Activated CD4-positive, alpha-beta T cell treated with anti-CD3 and anti-CD28 coated beads for 36 hours (primary cell): ENCODE measurements at regions of chr13 and their contacts with region 1.

Region 1: DNA sequence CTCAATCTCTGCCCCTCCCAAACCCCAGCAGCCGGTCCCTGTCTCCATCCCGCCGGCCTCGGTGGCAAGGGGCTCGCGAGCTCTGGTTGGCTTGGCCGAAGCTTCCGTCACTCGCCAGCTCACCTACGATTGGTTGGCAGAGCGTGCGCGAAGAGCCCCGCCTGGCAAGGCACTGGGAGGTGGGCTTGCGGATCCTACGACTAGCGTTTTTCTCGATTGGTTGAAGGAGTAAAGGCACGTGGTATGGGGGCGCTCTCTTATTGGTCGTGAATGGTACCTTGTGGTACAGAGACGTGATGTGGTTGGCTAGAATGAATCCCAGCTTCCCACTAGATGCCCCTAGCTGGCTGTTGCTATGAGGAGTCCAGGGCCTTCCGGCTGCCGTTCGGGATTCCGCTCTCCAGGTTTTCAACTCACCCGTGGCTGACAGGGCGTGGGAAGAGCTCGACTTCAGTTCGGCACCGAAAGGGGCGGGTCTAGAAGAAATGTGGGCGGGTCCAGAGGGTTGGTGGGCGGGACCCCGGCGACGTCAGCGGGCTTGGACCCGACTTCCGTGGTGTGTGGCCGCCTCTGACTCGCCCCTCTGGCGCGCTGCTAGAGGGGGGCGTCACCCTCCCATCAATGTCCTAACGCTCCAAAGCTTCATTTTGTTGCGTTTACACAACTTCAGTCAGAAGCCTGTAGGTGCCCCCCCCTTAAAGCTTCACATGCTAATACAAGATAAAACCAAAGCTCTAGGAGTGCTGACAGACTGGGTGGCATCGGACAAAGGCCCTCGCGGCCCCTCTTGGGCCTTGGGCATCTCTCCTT is 847 bp upstream of the RAP2A start:
- DNase-seq: peak; percentile 98
- ATAC-seq: peak; percentile 85
- H3K4me3 Mint-ChIP-seq: peak overlapping the region; percentile 94
- H3K27ac Mint-ChIP-seq: peak overlapping the region; percentile 99
- H3K4me1 Mint-ChIP-seq: peaks cover 25% of the 10 kb centered on the region
- H3K27me3 Mint-ChIP-seq: peaks cover 5% of the 10 kb centered on the region

Region 2: GRCh38 chr13:95676762-95677563 is 1756.2 kb before region 1 on chr13 and contains the start of gene DNAJC3:
- CTCF ChIA-PET with region 1: no interaction called
- POLR2A ChIA-PET with region 1: interaction called, 5 read pairs
- intact Hi-C with region 1: loop called (anchors 2 to 5 kb)
- DNase-seq: peak; percentile 99
- ATAC-seq: peak; percentile 96
- H3K4me3 Mint-ChIP-seq: peak within 1 kb of the TSS; percentile 96
- H3K27ac Mint-ChIP-seq: peak within 1 kb of the TSS; percentile 92
- H3K4me1 Mint-ChIP-seq: peaks cover 52% of the 10 kb centered on the region
- H3K27me3 Mint-ChIP-seq: no peaks in the 10 kb centered on the region
- total RNA-seq, gene DNAJC3: 13.4 to 16.3 TPM

Region 3: GRCh38 chr13:97295283-97296182 is 137.6 kb before region 1 on chr13:
- CTCF ChIA-PET with region 1: no interaction called
- POLR2A ChIA-PET with region 1: no interaction called
- intact Hi-C with region 1: loop called in 1 of 2 experiments (anchors 1 kb)
- DNase-seq: no peak
- ATAC-seq: no peak
- H3K4me3 Mint-ChIP-seq: no peak overlapping the region
- H3K27ac Mint-ChIP-seq: no peak overlapping the region
- H3K4me1 Mint-ChIP-seq: peaks cover 46% of the 10 kb centered on the region
- H3K27me3 Mint-ChIP-seq: no peaks in the 10 kb centered on the region

Region 4: GRCh38 chr13:97459215-97459777 is 26.2 kb after region 1 on chr13:
- CTCF ChIA-PET with region 1: interaction called, 3 read pairs
- POLR2A ChIA-PET with region 1: interaction called, 5 read pairs
- intact Hi-C with region 1: loop called (anchors 2 kb)
- DNase-seq: no peak
- ATAC-seq: peak; percentile 55
- H3K4me3 Mint-ChIP-seq: no peak overlapping the region
- H3K27ac Mint-ChIP-seq: peak overlapping the region; percentile 42
- H3K4me1 Mint-ChIP-seq: peaks cover 33% of the 10 kb centered on the region
- H3K27me3 Mint-ChIP-seq: no peaks in the 10 kb centered on the region

Region 5: GRCh38 chr13:97506511-97506910 is 73.4 kb after region 1 on chr13:
- CTCF ChIA-PET with region 1: no interaction called
- POLR2A ChIA-PET with region 1: no interaction called
- intact Hi-C with region 1: no loop called
- DNase-seq: no peak
- ATAC-seq: no peak
- H3K4me3 Mint-ChIP-seq: no peak overlapping the region
- H3K27ac Mint-ChIP-seq: no peak overlapping the region
- H3K4me1 Mint-ChIP-seq: no peaks in the 10 kb centered on the region
- H3K27me3 Mint-ChIP-seq: peaks cover 11% of the 10 kb centered on the region

Region 6: GRCh38 chr13:97539651-97540610 is 106.8 kb after region 1 on chr13:
- CTCF ChIA-PET with region 1: no interaction called
- POLR2A ChIA-PET with region 1: no interaction called
- intact Hi-C with region 1: loop called (anchors 5 kb)
- DNase-seq: no peak
- ATAC-seq: peak; percentile 90
- H3K4me3 Mint-ChIP-seq: no peak overlapping the region
- H3K27ac Mint-ChIP-seq: no peak overlapping the region
- H3K4me1 Mint-ChIP-seq: peaks cover 7% of the 10 kb centered on the region
- H3K27me3 Mint-ChIP-seq: peaks cover 5% of the 10 kb centered on the region

Region 7: DNA sequence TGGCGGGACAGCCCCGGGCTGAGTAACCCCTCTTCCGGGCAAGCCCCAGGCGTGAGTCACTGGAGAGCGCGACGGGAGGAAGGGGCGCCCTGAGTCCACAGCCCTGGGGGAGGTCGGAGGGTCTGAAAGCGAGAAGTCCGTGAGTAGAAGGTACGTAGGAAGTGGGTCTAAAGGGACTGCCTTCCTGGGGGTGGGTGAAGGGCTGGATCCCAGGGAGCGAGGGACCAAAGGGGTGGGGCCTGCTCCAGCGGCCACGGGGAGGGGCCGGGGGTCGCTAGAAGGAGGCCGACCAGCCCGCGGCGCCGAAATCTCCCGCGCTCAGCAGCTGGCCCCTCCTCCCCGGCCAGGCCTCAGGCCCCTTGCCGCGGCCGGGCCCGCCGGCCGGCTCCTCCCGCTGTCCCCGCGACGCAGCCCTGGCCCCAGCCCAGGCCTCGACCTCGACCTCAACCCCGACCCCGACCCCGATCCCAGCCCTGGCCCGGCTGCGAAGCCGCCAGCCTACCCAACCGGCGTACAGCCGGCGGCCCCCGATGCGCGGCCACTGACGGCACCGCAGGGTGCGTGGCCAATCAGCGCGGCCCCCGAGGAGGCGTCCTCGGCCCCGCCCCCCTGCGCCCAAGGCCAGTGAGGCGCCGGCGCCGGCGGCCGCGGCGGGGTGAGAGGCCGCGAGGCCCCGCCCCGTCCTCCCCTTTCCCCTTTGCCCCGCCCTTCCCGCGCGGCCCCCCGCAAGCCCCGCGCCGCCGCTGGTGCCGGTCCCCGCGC is 542.9 kb after region 1 on chr13:
- CTCF ChIA-PET with region 1: no interaction called
- POLR2A ChIA-PET with region 1: no interaction called
- intact Hi-C with region 1: loop called (anchors 1 to 2 kb)
- DNase-seq: peak; percentile 94
- ATAC-seq: peak; percentile 92
- H3K4me3 Mint-ChIP-seq: peak overlapping the region; percentile 99
- H3K27ac Mint-ChIP-seq: peak overlapping the region; percentile 96
- H3K4me1 Mint-ChIP-seq: peaks cover 31% of the 10 kb centered on the region
- H3K27me3 Mint-ChIP-seq: no peaks in the 10 kb centered on the region

Region 8: GRCh38 chr13:98570929-98571372 is 1137.8 kb after region 1 on chr13:
- CTCF ChIA-PET with region 1: no interaction called
- POLR2A ChIA-PET with region 1: no interaction called
- intact Hi-C with region 1: loop called (anchors 2 to 10 kb)
- DNase-seq: peak; percentile 65
- ATAC-seq: peak; percentile 58
- H3K4me3 Mint-ChIP-seq: peak overlapping the region; percentile 75
- H3K27ac Mint-ChIP-seq: peak overlapping the region; percentile 73
- H3K4me1 Mint-ChIP-seq: peaks cover 87% of the 10 kb centered on the region
- H3K27me3 Mint-ChIP-seq: no peaks in the 10 kb centered on the region